ENCODE measurements at regions of chr17 and their contacts with region 1.

Region 1: GRCh38 chr17:1882836-1883235 is 53.0 kb downstream of the RPA1 start:
- DNase-seq: peak; percentile 15
- H3K4me3 ChIP-seq: no peak overlapping the region
- H3K27ac ChIP-seq: no peak overlapping the region
- H3K4me1 ChIP-seq: no peaks in the 10 kb centered on the region
- H3K27me3 ChIP-seq: no peaks in the 10 kb centered on the region
- CTCF ChIP-seq: peak; percentile 40 to 47

Region 2: DNA sequence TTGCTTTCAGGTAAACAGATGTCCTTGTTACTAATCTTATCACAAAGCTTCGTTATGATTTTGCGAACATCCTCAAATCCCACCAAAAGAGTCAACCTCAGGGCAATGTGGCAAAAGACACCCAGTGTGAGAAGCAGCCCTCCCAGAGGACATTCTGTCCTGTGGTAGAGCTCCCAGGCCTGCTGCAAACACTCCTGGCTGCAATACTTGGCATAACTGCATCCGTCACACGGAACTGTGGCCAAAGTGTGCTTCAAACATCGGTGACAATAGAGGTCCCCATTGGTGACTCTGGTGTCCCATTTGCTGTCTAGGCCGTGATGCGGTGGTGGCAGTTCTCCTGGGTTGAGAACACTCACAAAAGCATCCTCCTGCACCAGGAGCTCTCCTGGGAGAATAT is 82.6 kb before region 1 on chr17:
- CTCF ChIA-PET with region 1: no interaction called
- dilution Hi-C with region 1: loop called (anchors 10 kb)
- in situ Hi-C with region 1: no loop called
- intact Hi-C with region 1: no loop called
- DNase-seq: no peak
- H3K4me3 ChIP-seq: no peak overlapping the region
- H3K27ac ChIP-seq: no peak overlapping the region
- H3K4me1 ChIP-seq: no peaks in the 10 kb centered on the region
- H3K27me3 ChIP-seq: no peaks in the 10 kb centered on the region
- CTCF ChIP-seq: no peak

Region 3: GRCh38 chr17:1829592-1830257 is 53.1 kb before region 1 on chr17 and contains the starts of genes RPA1 and SMYD4:
- CTCF ChIA-PET with region 1: no interaction called
- dilution Hi-C with region 1: loop called (anchors 5 kb)
- in situ Hi-C with region 1: no loop called
- intact Hi-C with region 1: no loop called
- DNase-seq: peak; percentile 87
- H3K4me3 ChIP-seq: peak within 1 kb of the TSS; percentile 78 to 97 (median 85)
- H3K27ac ChIP-seq: peak within 1 kb of the TSS; percentile 46
- H3K4me1 ChIP-seq: peaks cover 5% of the 10 kb centered on the region
- H3K27me3 ChIP-seq: no peaks in the 10 kb centered on the region
- CTCF ChIP-seq: no peak
- total RNA-seq, gene RPA1: 17.2 to 78.5 TPM
- total RNA-seq, gene SMYD4: 12.7 to 15.0 TPM

Region 4: GRCh38 chr17:2259769-2260536 is 377.1 kb after region 1 on chr17:
- CTCF ChIA-PET with region 1: no interaction called
- dilution Hi-C with region 1: no loop called
- in situ Hi-C with region 1: loop called in 1 of 2 experiments (anchors 25 kb)
- intact Hi-C with region 1: no loop called
- DNase-seq: no peak
- H3K4me3 ChIP-seq: no peak overlapping the region
- H3K27ac ChIP-seq: no peak overlapping the region
- H3K4me1 ChIP-seq: peaks cover 12% of the 10 kb centered on the region
- H3K27me3 ChIP-seq: no peaks in the 10 kb centered on the region
- CTCF ChIP-seq: no peak

Measured in mammary epithelial cell (primary cell).